Left ventricle myocardium inferior (tissue), 1 donor: ENCODE measurements at regions of chr14 and their contacts with region 1.

Region 1: GRCh38 chr14:20855652-20856291 is 35.4 kb upstream of the RNASE3 start:
- DNase-seq: peak; percentile 19
- H3K4me3 ChIP-seq: no peak overlapping the region
- H3K27ac ChIP-seq: no peak overlapping the region
- H3K4me1 ChIP-seq: no peaks in the 10 kb centered on the region
- H3K27me3 ChIP-seq: peaks cover 37% of the 10 kb centered on the region
- CTCF ChIP-seq: peak; percentile 85

Region 2: GRCh38 chr14:20697273-20698017 is 158.3 kb before region 1 on chr14:
- intact Hi-C with region 1: loop called (anchors 5 kb)
- DNase-seq: peak; percentile 39
- H3K4me3 ChIP-seq: no peak overlapping the region
- H3K27ac ChIP-seq: no peak overlapping the region
- H3K4me1 ChIP-seq: peaks cover 5% of the 10 kb centered on the region
- H3K27me3 ChIP-seq: no peaks in the 10 kb centered on the region
- CTCF ChIP-seq: peak; percentile 86

Region 3: DNA sequence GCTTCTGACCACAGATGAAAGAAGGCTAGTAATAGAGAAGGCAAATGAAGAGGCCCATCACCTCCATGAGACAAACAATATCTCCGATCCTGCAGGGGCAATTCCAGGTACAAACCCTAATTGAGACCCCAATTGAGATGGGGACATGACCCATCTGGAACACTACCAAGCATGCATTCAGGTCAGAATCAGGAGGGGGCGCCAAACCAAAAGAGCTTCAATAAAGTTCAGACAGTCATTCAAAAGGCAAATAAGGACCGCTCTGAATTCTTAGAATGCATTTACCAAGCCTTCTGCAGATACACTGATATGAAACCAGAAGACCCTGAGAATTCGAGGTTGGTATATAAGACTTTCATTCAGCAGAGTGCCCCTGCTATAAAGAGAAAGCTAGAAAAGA is 97.8 kb before region 1 on chr14:
- intact Hi-C with region 1: loop called (anchors 5 kb)
- DNase-seq: no peak
- H3K4me3 ChIP-seq: no peak overlapping the region
- H3K27ac ChIP-seq: no peak overlapping the region
- H3K4me1 ChIP-seq: peaks cover 5% of the 10 kb centered on the region
- H3K27me3 ChIP-seq: no peaks in the 10 kb centered on the region
- CTCF ChIP-seq: peak; percentile 62